Activated CD4-positive, alpha-beta T cell treated with anti-CD3 and anti-CD28 coated beads, Interleukin-2, amount 10 ng/mL, durations not matched to agents 24 days and 14 days (primary cell): ENCODE measurements at regions of chr5 and their contacts with region 1.

Region 1: DNA sequence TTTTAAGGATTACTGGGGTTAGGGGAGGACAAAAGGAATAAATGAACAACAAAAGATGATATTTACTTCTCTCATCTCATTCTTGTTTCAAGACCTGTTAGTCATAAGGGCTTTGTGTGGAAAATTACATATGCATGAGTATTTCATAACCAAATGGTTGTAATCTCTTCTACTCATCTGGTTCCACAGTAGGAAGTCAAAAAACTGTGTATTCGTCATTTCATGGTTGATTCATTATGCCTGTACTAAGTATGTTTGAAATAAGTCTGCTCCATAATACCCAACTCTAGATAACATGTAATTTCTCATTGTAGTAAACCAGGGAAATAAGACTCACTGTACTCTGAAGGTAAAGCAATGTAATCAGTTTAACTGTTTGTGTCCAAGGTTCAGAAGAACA is 212.9 kb downstream of the ARRDC3 start:
- DNase-seq: no peak
- H3K4me3 Mint-ChIP-seq: no peak overlapping the region
- H3K27ac Mint-ChIP-seq: peak overlapping the region; percentile 67
- H3K4me1 Mint-ChIP-seq: peaks cover 17% of the 10 kb centered on the region
- H3K27me3 Mint-ChIP-seq: no peaks in the 10 kb centered on the region

Region 2: GRCh38 chr5:90873033-90873517 is 297.2 kb before region 1 on chr5:
- intact Hi-C with region 1: loop called (anchors 5 kb)
- DNase-seq: no peak
- H3K4me3 Mint-ChIP-seq: no peak overlapping the region
- H3K27ac Mint-ChIP-seq: no peak overlapping the region
- H3K4me1 Mint-ChIP-seq: peaks cover 2% of the 10 kb centered on the region
- H3K27me3 Mint-ChIP-seq: peaks cover 37% of the 10 kb centered on the region

Region 3: DNA sequence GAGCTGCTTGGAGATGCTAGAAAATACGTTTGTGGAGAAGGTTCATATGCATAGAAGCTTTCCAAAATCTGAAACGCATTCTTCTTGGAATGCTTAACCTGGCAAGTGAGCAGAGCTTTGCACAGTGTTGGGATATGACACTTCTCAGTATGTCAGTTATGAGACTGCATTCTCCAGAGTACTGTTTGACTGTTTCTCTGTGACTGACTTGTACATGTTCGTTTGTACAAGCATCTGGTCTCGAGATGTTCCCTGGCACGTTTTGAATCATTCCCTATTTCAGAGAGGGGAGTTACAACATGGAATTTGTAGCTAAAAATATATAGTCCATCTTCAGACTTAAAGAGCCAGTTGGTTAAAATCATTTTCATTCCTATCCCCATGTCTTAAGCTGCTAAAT is 59.6 kb before region 1 on chr5:
- intact Hi-C with region 1: no loop called
- DNase-seq: peak; percentile 16
- H3K4me3 Mint-ChIP-seq: no peak overlapping the region
- H3K27ac Mint-ChIP-seq: no peak overlapping the region
- H3K4me1 Mint-ChIP-seq: no peaks in the 10 kb centered on the region
- H3K27me3 Mint-ChIP-seq: peaks cover 17% of the 10 kb centered on the region

Region 4: DNA sequence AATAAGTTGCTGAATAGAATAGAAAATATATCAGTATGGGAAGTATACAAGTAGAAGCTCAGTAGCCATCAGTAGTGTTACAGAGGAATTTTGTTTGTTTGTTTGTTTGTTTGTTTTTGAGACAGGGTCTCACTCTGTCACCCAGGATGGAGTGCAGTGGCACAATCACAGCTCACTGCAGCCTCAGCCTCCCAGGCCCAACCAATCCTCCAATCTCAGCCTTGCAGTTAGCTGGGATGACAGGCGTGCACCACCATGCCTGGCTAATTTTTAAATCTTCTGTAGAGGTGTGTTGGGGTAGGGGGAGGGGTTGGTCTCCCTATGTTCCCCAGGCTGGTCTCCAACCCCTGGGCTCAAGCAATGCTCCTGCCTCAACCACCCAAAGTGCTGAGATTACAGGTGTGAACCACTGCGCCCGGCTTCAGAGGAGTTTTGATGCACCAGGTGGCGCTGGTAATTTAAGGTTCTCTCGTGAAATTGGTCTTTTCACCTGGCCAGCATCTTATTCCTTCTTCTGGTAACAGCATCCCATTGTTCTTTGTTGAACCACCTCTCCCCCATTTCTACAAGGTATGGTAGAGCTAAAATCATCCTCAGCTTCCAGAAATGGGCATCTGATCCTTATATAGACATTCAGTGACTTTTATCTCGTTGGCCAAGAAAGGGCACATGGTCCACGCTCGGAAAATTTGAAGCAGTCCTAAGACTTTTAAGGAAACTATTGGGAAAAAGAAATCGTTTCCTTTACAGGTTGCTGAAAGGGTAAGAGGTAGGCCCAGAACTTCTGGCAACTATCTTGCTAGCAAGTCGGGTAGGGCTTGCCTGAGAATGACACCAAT is 55.8 kb after region 1 on chr5:
- intact Hi-C with region 1: loop called (anchors 5 kb)
- DNase-seq: peak; percentile 87
- H3K4me3 Mint-ChIP-seq: no peak overlapping the region
- H3K27ac Mint-ChIP-seq: no peak overlapping the region
- H3K4me1 Mint-ChIP-seq: peaks cover 3% of the 10 kb centered on the region
- H3K27me3 Mint-ChIP-seq: peaks cover 26% of the 10 kb centered on the region

Region 5: GRCh38 chr5:91266184-91266705 is 96.0 kb after region 1 on chr5:
- intact Hi-C with region 1: loop called (anchors 1 kb)
- DNase-seq: no peak
- H3K4me3 Mint-ChIP-seq: no peak overlapping the region
- H3K27ac Mint-ChIP-seq: no peak overlapping the region
- H3K4me1 Mint-ChIP-seq: peaks cover 22% of the 10 kb centered on the region
- H3K27me3 Mint-ChIP-seq: peaks cover 19% of the 10 kb centered on the region